ENCODE measurements at regions of chr13 and their contacts with region 1.

Region 1: DNA sequence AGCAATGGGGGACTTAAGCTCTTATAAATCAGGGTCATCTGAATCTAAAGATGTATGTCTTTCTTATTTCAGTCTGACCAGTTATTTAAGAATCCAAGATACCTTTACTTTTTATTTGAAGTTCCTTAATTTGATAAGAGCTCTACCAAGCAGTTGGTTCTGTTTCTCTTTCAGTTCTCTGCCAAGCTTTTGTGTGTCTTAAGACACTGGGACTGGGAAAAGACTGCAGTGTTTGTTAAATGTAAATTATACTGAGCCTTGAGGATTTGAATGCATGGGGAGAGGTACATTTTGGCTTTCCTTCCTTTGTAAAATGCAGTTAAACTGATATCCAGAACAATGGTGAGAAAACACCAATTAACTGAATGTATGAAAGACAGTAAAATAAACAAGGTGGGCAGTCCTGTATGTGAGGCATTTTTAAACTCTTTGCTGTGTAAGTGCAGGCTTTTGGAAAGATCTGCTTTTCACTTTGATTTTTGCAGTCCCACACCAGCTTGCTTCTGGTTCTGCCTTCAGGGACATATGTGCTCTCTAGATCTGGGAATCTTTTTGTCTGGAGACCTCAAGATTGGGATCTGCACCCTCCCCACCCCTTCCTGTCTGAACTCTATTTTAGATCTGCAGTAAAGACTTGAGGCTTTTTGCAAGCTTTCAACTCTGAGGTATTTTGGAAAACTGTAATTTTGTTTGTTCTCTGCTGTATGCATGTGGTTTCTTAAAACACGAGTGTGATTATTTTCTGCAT is 77.6 kb downstream of the LRCH1 start:
- DNase-seq: no peak
- ATAC-seq: no peak
- H3K4me3 ChIP-seq: no peak overlapping the region
- H3K4me3 Mint-ChIP-seq: peak overlapping the region; percentile 1
- H3K27ac ChIP-seq: no peak overlapping the region
- H3K27ac Mint-ChIP-seq: peak overlapping the region; percentile 28
- H3K4me1 ChIP-seq: peaks cover 20% of the 10 kb centered on the region
- H3K4me1 Mint-ChIP-seq: peaks cover 64% of the 10 kb centered on the region
- H3K27me3 ChIP-seq: no peaks in the 10 kb centered on the region
- H3K27me3 Mint-ChIP-seq: no peaks in the 10 kb centered on the region
- CTCF ChIP-seq: no peak

Region 2: DNA sequence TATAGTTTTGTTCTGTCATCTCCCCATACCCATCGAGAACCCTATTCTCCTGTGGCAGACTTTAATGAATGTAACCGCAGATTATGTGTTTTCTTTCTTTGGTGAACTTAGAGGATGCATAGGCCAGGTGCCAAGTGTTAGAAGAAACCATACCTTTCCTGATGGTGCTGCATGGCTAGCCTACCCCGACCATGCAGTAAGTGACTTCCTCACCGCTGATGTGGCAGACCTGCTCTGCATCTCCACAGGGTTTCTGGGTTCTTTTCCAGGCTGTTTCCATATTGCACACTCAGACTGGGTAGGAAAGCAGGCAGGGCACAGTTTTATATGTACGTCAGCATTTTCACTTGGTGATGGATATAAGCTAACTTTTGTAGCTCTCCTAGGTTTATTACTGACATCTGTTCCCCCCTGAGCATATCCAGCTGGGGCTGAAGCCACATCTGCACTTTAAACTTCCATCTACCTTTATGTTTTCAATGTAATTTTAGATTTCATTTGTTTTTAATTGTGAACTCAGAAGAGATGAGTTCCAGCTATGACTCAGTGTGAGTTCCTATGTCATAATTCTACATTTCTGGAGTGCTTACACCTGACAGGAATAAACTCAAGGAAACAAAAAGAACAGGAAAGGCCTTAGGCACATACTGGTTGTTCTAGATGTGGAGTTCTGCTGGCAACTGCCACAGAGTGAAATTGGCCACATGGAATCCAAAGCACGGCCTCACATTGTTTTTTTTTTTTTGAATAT is 35.3 kb before region 1 on chr13:
- CTCF ChIA-PET with region 1: interaction called, 3 read pairs
- POLR2A ChIA-PET with region 1: no interaction called
- intact Hi-C with region 1: loop called in 1 of 2 experiments (anchors 5 kb)
- DNase-seq: no peak
- ATAC-seq: no peak
- H3K4me3 ChIP-seq: no peak overlapping the region
- H3K4me3 Mint-ChIP-seq: no peak overlapping the region
- H3K27ac ChIP-seq: no peak overlapping the region
- H3K27ac Mint-ChIP-seq: no peak overlapping the region
- H3K4me1 ChIP-seq: peaks cover 58% of the 10 kb centered on the region
- H3K4me1 Mint-ChIP-seq: peaks cover 90% of the 10 kb centered on the region
- H3K27me3 ChIP-seq: no peaks in the 10 kb centered on the region
- H3K27me3 Mint-ChIP-seq: no peaks in the 10 kb centered on the region
- CTCF ChIP-seq: no peak

Region 3: DNA sequence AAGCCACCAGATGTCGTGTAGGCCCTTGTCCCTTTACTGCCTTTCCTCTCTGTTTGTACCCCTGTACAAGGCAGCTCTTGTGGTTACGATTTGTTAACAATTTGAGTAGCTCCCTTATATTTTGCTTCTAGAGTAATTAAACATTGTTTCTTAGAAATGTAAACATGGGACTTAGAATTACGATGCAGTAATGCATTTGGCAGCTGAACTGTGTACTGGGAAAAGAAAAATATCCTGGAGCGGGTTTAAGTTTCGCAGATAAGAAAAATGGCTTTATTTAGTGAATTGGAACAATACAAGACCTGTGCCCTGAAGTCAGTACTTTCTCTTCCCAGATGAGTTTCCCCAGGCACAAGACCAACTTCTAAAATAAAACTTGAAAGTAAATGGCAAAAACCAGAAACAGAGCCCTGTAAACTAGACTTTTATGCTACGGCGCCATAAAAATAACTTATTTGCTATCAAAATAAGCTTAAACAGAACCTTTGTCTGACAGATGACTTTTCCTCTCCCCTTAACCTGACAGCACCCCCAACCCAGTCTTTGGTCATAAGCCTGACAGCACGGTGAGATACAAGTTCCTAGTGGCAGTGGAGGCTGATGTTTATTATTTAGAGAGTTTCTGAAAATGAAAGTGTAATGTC is 14.6 kb before region 1 on chr13:
- CTCF ChIA-PET with region 1: no interaction called
- POLR2A ChIA-PET with region 1: interaction called, 4 read pairs
- intact Hi-C with region 1: loop called in 1 of 2 experiments (anchors 2 kb)
- DNase-seq: no peak
- ATAC-seq: no peak
- H3K4me3 ChIP-seq: no peak overlapping the region
- H3K4me3 Mint-ChIP-seq: no peak overlapping the region
- H3K27ac ChIP-seq: no peak overlapping the region
- H3K27ac Mint-ChIP-seq: no peak overlapping the region
- H3K4me1 ChIP-seq: no peaks in the 10 kb centered on the region
- H3K4me1 Mint-ChIP-seq: peaks cover 56% of the 10 kb centered on the region
- H3K27me3 ChIP-seq: no peaks in the 10 kb centered on the region
- H3K27me3 Mint-ChIP-seq: no peaks in the 10 kb centered on the region
- CTCF ChIP-seq: no peak

Region 4: GRCh38 chr13:46751811-46752635 is 121.4 kb after region 1 on chr13:
- CTCF ChIA-PET with region 1: no interaction called
- POLR2A ChIA-PET with region 1: no interaction called
- intact Hi-C with region 1: no loop called
- DNase-seq: peak; percentile 13 to 92 (median 48)
- ATAC-seq: peak; percentile 94
- H3K4me3 ChIP-seq: no peak overlapping the region
- H3K4me3 Mint-ChIP-seq: peak overlapping the region; percentile 19
- H3K27ac ChIP-seq: no peak overlapping the region
- H3K27ac Mint-ChIP-seq: peak overlapping the region; percentile 72
- H3K4me1 ChIP-seq: peaks cover 20% of the 10 kb centered on the region
- H3K4me1 Mint-ChIP-seq: peaks cover 35% of the 10 kb centered on the region
- H3K27me3 ChIP-seq: no peaks in the 10 kb centered on the region
- H3K27me3 Mint-ChIP-seq: no peaks in the 10 kb centered on the region
- CTCF ChIP-seq: no peak